Gastrocnemius medialis (tissue), 4 donors: ENCODE measurements at regions of chr6 and their contacts with region 1.

Region 1: DNA sequence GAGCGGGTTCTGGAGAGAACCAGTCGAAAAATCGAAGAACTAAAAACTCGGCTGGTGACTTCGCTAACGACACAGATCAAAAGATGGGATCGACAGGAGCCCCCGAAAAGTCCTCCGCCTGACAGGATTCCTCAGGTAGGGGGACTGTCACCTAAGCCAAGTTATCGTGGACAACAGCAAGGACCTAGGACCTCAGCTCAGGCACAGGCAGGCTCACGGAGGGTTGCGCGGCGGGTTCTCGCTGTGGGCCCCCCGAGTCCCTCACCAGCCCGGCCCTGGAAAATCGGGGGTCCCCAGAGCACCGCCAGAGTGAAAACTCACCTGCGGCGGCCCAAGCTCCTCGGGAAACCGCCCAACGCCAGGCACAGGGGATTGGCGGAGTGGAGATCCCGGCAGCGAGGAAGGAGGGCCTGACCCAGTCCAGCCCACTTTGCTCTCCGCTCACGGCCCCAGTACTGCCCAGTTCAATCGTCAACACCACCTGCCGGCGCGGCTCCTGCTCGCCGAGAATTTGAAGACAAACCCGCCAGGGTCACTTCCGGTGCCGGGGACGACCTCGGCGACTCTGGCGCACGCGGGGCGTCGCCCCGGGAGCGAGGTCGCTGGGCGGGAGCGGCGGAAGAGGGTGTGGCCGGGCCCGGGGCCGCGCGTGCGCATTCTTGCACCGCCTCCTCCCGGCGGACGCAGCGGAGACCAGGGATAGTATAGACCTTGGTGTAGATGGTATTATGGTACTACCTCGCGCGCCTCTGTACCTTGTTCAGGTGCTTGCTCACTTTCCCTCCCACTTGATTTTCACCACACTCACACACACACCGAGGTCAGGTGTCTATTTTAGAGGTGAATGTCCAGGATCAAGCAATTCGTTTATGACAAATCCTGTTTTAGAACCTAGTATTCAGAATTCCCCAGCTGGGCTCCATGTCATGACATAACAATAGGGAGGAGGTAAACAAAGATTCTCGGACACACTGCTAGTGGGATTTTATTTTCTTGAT is at the start of gene KATNA1:
- DNase-seq: peak; percentile 78 to 86
- ATAC-seq: peak; percentile 92
- H3K4me3 ChIP-seq: peak within 1 kb of the TSS; percentile 62 to 92 (median 86)
- H3K27ac ChIP-seq: peak within 1 kb of the TSS; percentile 87 to 95 (median 92)
- H3K4me1 ChIP-seq: peaks cover 15 to 18% of the 10 kb centered on the region in 2 donors
- H3K27me3 ChIP-seq: no peaks in the 10 kb centered on the region
- CTCF ChIP-seq: peak in 1 of 5 experiments; percentile 7
- POLR2A ChIP-seq: peak; percentile 89 to 93
- total RNA-seq, gene KATNA1: 16.0 to 29.3 (median 26.0) TPM

Region 2: GRCh38 chr6:149316798-149317655 is 331.4 kb before region 1 on chr6:
- in situ Hi-C with region 1: no loop called
- intact Hi-C with region 1: loop called (anchors 1 kb)
- DNase-seq: peak; percentile 79 to 90
- ATAC-seq: peak; percentile 89
- H3K4me3 ChIP-seq: peak overlapping the region; percentile 89 to 98 (median 96)
- H3K27ac ChIP-seq: peak overlapping the region; percentile 94 to 98 (median 96)
- H3K4me1 ChIP-seq: peaks cover 24 to 30% of the 10 kb centered on the region in 2 donors
- H3K27me3 ChIP-seq: peaks cover 0 to 2% (median 0%) of the 10 kb centered on the region in 3 donors
- CTCF ChIP-seq: no peak
- POLR2A ChIP-seq: peak; percentile 66 to 68

Region 3: GRCh38 chr6:149565527-149566409 is 82.7 kb before region 1 on chr6 and contains the start of gene GINM1:
- in situ Hi-C with region 1: no loop called
- intact Hi-C with region 1: loop called (anchors 2 kb)
- DNase-seq: peak; percentile 84 to 92
- ATAC-seq: peak; percentile 90 to 93
- H3K4me3 ChIP-seq: peak within 1 kb of the TSS; percentile 90 to 97 (median 95)
- H3K27ac ChIP-seq: peak within 1 kb of the TSS; percentile 89 to 96 (median 94)
- H3K4me1 ChIP-seq: peaks cover 14 to 22% of the 10 kb centered on the region in 2 donors
- H3K27me3 ChIP-seq: no peaks in the 10 kb centered on the region
- CTCF ChIP-seq: peak; percentile 58 to 76 (median 66)
- POLR2A ChIP-seq: no peak
- total RNA-seq, gene GINM1: 28.9 to 39.4 (median 33.1) TPM

Region 4: GRCh38 chr6:149717588-149718458 is 69.4 kb after region 1 on chr6 and contains the start of gene LATS1:
- in situ Hi-C with region 1: no loop called
- intact Hi-C with region 1: loop called (anchors 1 kb)
- DNase-seq: peak; percentile 76 to 84
- ATAC-seq: peak; percentile 93
- H3K4me3 ChIP-seq: peak within 1 kb of the TSS; percentile 77 to 96 (median 92)
- H3K27ac ChIP-seq: peak within 1 kb of the TSS; percentile 95 to 98 (median 97)
- H3K4me1 ChIP-seq: peaks cover 26 to 33% of the 10 kb centered on the region in 2 donors
- H3K27me3 ChIP-seq: no peaks in the 10 kb centered on the region
- CTCF ChIP-seq: no peak
- POLR2A ChIP-seq: peak; percentile 61 to 71
- total RNA-seq, gene LATS1: 6.3 to 21.8 (median 14.4) TPM

Region 5: DNA sequence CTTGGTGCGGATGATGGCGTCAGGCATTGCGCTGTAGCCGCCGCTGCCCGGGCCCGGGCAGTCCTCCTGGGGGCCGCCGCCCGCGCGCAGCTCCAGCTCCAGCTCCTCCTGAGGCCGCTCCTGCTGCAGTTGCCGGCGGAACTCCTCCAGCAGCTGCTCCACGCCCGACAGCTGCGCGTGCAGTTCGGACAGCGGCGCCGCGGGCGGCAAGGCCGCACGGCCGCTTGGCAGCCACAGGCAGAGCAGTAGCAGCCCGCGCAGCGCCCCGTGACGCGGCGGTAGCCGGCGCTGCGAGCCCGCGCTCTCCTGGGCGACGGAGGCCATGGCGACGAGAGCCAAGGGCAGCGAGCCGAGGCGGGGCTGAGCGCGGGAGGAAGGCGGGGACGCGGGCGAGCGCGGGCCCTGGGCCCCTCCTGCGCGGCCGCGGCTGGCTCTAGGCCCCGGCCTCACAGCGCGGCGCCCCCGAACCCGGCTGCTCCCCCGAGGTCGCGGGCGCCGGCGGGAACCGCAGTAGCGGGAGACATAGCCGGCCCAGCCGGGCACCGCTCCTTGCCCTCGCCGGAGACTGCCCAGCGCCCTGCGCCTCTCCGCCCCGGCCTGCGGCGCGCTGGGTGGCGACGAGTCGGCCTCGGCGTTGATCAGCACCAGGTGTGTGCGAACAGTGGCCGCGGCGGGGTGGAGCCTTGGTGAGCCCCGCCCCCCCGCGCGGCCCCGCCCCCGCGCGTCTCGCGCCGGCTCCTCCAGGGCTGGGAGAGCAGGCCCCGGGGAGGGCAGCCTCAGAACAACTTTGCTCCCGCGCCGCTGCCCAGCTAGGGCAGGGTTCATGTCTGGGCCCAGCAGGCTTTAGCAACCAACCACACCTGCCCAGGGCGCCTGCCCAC is 215.5 kb after region 1 on chr6 and contains the start of gene LRP11:
- in situ Hi-C with region 1: no loop called
- intact Hi-C with region 1: loop called (anchors 10 kb)
- DNase-seq: peak; percentile 77 to 84
- ATAC-seq: peak; percentile 79
- H3K4me3 ChIP-seq: peak within 1 kb of the TSS; percentile 61 to 89 (median 72)
- H3K27ac ChIP-seq: peak within 1 kb of the TSS; percentile 87 to 96 (median 94)
- H3K4me1 ChIP-seq: peaks cover 15 to 26% of the 10 kb centered on the region in 2 donors
- H3K27me3 ChIP-seq: no peaks in the 10 kb centered on the region
- CTCF ChIP-seq: peak in 1 of 5 experiments; percentile 19
- POLR2A ChIP-seq: peak; percentile 90 to 93
- total RNA-seq, gene LRP11: 5.5 to 19.8 (median 6.1) TPM